Activated CD4-positive, alpha-beta memory T cell treated with anti-CD3 and anti-CD28 coated beads for 36 hours (primary cell): ENCODE measurements at regions of chr1 and their contacts with region 1.

Region 1: GRCh38 chr1:219209578-219209977 is 35.9 kb downstream of the LYPLAL1 start:
- DNase-seq: no peak
- H3K4me3 Mint-ChIP-seq: no peak overlapping the region
- H3K27ac Mint-ChIP-seq: no peak overlapping the region
- H3K4me1 Mint-ChIP-seq: no peaks in the 10 kb centered on the region
- H3K27me3 Mint-ChIP-seq: no peaks in the 10 kb centered on the region

Region 2: DNA sequence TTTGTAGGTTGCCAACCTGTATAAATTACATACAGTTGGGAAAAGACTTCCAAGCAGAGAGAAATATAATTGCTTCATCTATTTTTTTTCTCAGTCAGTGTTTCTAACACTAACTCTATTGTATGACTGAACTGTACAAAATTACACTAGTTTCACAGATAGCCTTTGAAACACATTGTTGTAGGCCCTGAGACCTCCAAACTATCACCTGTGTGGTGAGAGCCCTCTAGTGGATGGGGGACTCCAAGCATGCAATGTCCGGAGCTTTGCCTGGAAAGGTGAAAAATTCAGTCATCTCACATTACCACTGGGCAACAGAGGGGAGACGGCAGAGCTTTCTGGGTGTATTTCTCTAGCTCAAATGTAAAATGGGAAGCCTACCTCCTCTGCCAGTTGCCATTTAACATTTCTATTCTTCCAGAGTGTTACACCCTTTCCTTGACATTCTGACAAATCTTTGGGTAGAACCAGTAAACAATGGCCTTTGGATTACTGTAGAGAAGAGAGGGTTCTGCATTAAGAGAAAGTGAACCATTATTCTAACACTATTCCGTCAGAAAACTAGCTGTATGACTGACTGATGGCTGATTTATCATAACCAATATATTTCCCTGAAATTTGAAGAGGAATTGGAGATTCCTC is 176.3 kb after region 1 on chr1:
- CTCF ChIA-PET with region 1: no interaction called
- POLR2A ChIA-PET with region 1: no interaction called
- intact Hi-C with region 1: loop called (anchors 1 kb)
- DNase-seq: peak; percentile 42
- H3K4me3 Mint-ChIP-seq: no peak overlapping the region
- H3K27ac Mint-ChIP-seq: no peak overlapping the region
- H3K4me1 Mint-ChIP-seq: no peaks in the 10 kb centered on the region
- H3K27me3 Mint-ChIP-seq: no peaks in the 10 kb centered on the region